ENCODE measurements at regions of chr11 and their contacts with region 1.

Region 1: DNA sequence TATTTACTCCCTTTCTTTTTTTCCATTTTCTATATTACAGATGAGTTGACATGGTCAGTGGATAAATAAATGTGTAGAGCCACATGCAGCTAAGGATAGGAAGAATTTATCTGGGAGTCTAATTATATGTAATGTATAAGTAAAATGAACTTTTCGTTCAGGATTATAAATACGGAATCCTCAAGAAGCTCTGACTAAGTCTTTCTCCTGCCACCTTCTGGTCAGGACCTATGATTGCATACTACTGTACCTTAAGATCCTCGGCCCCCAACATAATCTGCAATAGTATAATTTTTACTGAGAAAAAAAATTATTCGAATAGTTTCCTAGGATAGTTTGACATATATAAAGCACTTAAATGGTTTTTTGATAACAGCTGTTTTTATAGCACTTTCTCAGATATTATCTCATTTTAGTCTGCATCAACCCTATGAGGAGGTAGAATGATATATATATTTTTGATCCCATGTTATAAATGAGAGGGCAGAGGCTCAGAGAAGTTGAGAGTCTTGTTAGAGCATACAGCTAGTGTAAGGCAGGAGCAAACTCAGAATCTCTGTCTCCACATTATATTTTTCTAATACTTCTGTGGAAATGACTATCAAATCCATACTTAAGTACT is 36.1 kb downstream of the CCDC90B start:
- DNase-seq: no peak
- H3K4me3 ChIP-seq: no peak overlapping the region
- H3K27ac ChIP-seq: no peak overlapping the region
- H3K4me1 ChIP-seq: no peaks in the 10 kb centered on the region
- H3K27me3 ChIP-seq: no peaks in the 10 kb centered on the region
- CTCF ChIP-seq: peak; percentile 65

Region 2: GRCh38 chr11:82906244-82906654 is 343.8 kb before region 1 on chr11:
- intact Hi-C with region 1: loop called (anchors 2 kb)
- DNase-seq: no peak
- H3K4me3 ChIP-seq: no peak overlapping the region
- H3K27ac ChIP-seq: no peak overlapping the region
- H3K4me1 ChIP-seq: no peaks in the 10 kb centered on the region
- H3K27me3 ChIP-seq: no peaks in the 10 kb centered on the region
- CTCF ChIP-seq: peak; percentile 69

Region 3: GRCh38 chr11:82927254-82927880 is 322.7 kb before region 1 on chr11:
- intact Hi-C with region 1: no loop called
- DNase-seq: peak; percentile 42
- H3K4me3 ChIP-seq: no peak overlapping the region
- H3K27ac ChIP-seq: no peak overlapping the region
- H3K4me1 ChIP-seq: no peaks in the 10 kb centered on the region
- H3K27me3 ChIP-seq: no peaks in the 10 kb centered on the region
- CTCF ChIP-seq: peak; percentile 85

Region 4: GRCh38 chr11:83087035-83087434 is 163.0 kb before region 1 on chr11:
- intact Hi-C with region 1: loop called (anchors 5 kb)
- DNase-seq: no peak
- H3K4me3 ChIP-seq: no peak overlapping the region
- H3K27ac ChIP-seq: no peak overlapping the region
- H3K4me1 ChIP-seq: no peaks in the 10 kb centered on the region
- H3K27me3 ChIP-seq: no peaks in the 10 kb centered on the region
- CTCF ChIP-seq: peak; percentile 18

Region 5: DNA sequence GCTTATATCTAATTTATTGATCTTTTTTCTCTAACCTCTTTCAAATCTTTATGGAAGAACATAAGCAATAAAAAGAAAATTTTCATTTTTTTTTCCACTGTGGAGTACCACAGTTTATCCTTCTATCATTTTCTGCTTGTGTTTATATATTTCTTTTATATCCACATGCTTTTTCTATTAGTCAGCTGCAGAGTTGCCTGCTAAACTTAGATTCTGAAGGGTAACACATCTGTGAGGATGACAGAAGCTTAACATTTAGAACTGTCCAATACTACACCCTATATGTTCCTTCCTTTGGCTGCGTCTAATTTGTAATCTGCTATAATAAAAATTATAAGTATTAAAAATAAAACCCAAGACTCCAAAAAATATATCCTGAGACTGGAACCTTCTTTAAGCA is 15.2 kb after region 1 on chr11:
- intact Hi-C with region 1: no loop called
- DNase-seq: no peak
- H3K4me3 ChIP-seq: no peak overlapping the region
- H3K27ac ChIP-seq: no peak overlapping the region
- H3K4me1 ChIP-seq: no peaks in the 10 kb centered on the region
- H3K27me3 ChIP-seq: no peaks in the 10 kb centered on the region
- CTCF ChIP-seq: no peak